ENCODE measurements at regions of chr2 and their contacts with region 1.

Region 1: GRCh38 chr2:88055371-88056128 is at the start of gene KRCC1:
- DNase-seq: peak; percentile 91 to 94
- H3K4me3 ChIP-seq: peak within 1 kb of the TSS; percentile 76
- H3K27ac ChIP-seq: peak within 1 kb of the TSS; percentile 74
- H3K4me1 ChIP-seq: peaks cover 21% of the 10 kb centered on the region
- H3K27me3 ChIP-seq: no peaks in the 10 kb centered on the region
- CTCF ChIP-seq: no peak
- total RNA-seq, gene KRCC1: 12.3 and 17.4 TPM in 2 replicates

Region 2: DNA sequence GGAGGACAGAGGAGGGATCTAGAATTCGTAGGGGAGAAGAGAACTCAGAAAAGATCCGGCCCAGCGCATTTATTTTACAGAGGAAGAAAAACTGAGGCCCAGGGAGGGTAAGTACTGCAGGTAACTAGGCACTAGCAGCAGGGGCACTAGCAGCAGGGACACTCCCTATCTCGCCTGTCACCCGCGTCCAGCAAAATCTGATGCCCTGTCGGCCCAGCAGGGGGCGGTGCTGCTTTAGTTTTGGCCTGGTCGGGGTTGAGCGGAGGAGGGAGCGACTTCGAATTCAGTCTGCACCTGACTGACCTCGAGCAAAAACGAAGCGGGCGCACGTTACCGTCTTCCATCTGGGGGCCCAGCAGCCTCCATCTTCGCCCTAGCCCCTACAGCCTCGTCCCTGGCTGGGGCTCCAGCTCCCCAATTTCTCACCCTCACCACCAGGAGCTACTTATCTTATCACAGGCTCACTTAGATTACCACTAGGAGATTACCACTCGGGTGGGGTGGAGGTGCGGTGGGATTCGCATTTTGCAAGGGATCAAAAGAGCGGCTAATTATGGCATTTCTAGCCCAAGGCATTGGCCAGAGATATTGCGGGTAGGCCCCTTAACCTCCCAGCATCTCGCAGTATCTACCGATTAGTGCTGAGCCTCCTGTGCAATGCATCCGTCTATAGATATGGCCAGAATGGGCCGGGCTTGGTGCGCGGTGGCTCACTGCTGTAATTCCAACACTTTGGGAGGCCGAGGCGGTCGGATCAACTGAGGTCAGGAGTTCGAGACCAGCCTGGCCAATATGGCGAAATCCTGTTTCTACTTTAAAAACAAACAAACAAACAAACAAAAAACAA is 1247.0 kb before region 1 on chr2:
- CTCF ChIA-PET with region 1: no interaction called
- POLR2A ChIA-PET with region 1: no interaction called
- intact Hi-C with region 1: loop called (anchors 5 kb)
- DNase-seq: peak; percentile 81 to 93
- H3K4me3 ChIP-seq: peak overlapping the region; percentile 71
- H3K27ac ChIP-seq: no peak overlapping the region
- H3K4me1 ChIP-seq: peaks cover 7% of the 10 kb centered on the region; the same call in 1 of the 2 replicates
- H3K27me3 ChIP-seq: no peaks in the 10 kb centered on the region
- CTCF ChIP-seq: peak; percentile 94

Region 3: GRCh38 chr2:88016086-88016959 is 39.2 kb before region 1 on chr2 and contains the start of gene RNU2-63P:
- CTCF ChIA-PET with region 1: no interaction called
- POLR2A ChIA-PET with region 1: interaction called, 3 read pairs
- intact Hi-C with region 1: loop called (anchors 2 kb)
- DNase-seq: peak; percentile 78 to 95
- H3K4me3 ChIP-seq: peak within 1 kb of the TSS; percentile 76
- H3K27ac ChIP-seq: peak within 1 kb of the TSS; percentile 93
- H3K4me1 ChIP-seq: 0 out of 2 replicates have a peak, but pooled peaks cover 7% of the 10 kb centered on the region
- H3K27me3 ChIP-seq: no peaks in the 10 kb centered on the region
- CTCF ChIP-seq: no peak
- total RNA-seq, gene RNU2-63P: 3.9 TPM in 1 of 2 replicates, not detected in the other

Region 4: DNA sequence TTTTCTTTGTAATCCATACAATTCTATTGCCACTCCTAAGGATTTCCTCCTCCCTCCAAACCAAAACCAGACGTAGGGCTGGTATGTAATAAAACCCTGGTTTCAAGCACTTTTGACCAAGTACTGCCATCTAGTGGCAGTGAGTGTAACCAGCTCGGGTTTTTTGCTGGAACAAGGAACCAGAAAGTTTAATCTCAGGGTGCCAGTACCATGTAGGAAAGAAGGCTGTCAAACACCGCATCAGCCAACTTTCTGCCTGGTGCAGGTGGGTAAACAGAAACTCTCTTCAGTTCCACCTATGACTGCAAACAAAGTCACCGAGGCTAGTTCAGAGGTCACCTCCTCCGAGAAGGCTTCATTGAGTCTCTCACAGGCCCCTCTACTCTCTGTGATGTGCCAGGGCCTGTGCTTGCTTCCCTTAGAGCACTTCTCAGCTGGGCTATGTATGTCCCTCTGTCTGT is 104.4 kb after region 1 on chr2:
- CTCF ChIA-PET with region 1: interaction called, 20 read pairs
- POLR2A ChIA-PET with region 1: no interaction called
- intact Hi-C with region 1: loop called (anchors 1 kb)
- DNase-seq: peak; percentile 45 to 50
- H3K4me3 ChIP-seq: no peak overlapping the region
- H3K27ac ChIP-seq: no peak overlapping the region
- H3K4me1 ChIP-seq: no peaks in the 10 kb centered on the region
- H3K27me3 ChIP-seq: peaks cover 9% of the 10 kb centered on the region
- CTCF ChIP-seq: peak; percentile 91

Region 5: GRCh38 chr2:88176352-88176984 is 120.9 kb after region 1 on chr2:
- CTCF ChIA-PET with region 1: no interaction called
- POLR2A ChIA-PET with region 1: no interaction called
- intact Hi-C with region 1: no loop called
- DNase-seq: no peak
- H3K4me3 ChIP-seq: no peak overlapping the region
- H3K27ac ChIP-seq: no peak overlapping the region
- H3K4me1 ChIP-seq: no peaks in the 10 kb centered on the region
- H3K27me3 ChIP-seq: no peaks in the 10 kb centered on the region
- CTCF ChIP-seq: no peak

Region 6: GRCh38 chr2:88187038-88187676 is 131.6 kb after region 1 on chr2:
- CTCF ChIA-PET with region 1: no interaction called
- POLR2A ChIA-PET with region 1: no interaction called
- intact Hi-C with region 1: loop called (anchors 1 kb)
- DNase-seq: peak in 1 of 2 experiments; percentile 47
- H3K4me3 ChIP-seq: no peak overlapping the region
- H3K27ac ChIP-seq: no peak overlapping the region
- H3K4me1 ChIP-seq: no peaks in the 10 kb centered on the region
- H3K27me3 ChIP-seq: no peaks in the 10 kb centered on the region
- CTCF ChIP-seq: peak; percentile 65

Region 7: GRCh38 chr2:88671786-88672427 is 616.4 kb after region 1 on chr2:
- CTCF ChIA-PET with region 1: no interaction called
- POLR2A ChIA-PET with region 1: no interaction called
- intact Hi-C with region 1: no loop called
- DNase-seq: peak; percentile 8 to 59
- H3K4me3 ChIP-seq: no peak overlapping the region
- H3K27ac ChIP-seq: no peak overlapping the region
- H3K4me1 ChIP-seq: no peaks in the 10 kb centered on the region
- H3K27me3 ChIP-seq: no peaks in the 10 kb centered on the region
- CTCF ChIP-seq: peak; percentile 93